ENCODE measurements at regions of chr13 and their contacts with region 1.

Region 1: DNA sequence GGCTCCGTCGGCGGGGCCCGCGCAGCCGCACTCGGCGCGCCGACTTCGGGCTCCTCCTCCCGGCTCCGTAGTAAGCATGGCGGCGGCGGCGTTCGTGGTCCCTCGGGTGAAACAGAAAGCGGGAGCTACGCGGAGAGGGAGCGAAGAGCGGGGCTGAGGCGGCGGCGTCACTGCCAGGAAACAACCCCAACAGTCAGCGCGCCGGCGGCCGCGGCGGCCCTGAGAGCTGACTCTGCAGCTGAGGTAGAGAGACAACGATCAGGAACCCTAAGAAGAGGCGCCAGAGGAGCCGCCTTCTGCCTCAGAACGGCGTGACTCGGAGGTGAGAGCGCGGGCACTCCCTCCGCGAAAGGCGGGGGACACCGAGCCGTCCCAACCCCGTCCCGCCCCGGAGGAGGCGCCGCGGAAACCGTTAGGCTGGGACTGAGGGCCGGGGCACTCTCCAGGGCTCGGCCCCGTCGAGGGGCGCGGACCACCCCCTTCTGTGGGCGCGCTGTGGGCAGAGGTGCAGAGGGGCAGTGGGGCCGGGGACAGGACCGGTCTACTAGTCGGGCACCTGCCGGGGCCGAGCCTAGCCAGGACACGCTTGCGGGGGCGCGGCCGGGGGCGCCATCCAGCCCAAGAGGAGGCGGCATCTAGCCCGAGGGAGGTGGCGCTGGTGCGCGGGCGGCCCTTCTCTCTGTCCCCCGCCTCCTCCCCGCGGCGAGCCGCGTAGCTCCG is at the start of gene FNDC3A:
- DNase-seq: peak; percentile 89
- H3K4me3 Mint-ChIP-seq: peak within 1 kb of the TSS; percentile 96
- H3K27ac Mint-ChIP-seq: peak within 1 kb of the TSS; percentile 98
- H3K4me1 Mint-ChIP-seq: peaks cover 31% of the 10 kb centered on the region
- H3K27me3 Mint-ChIP-seq: peaks cover 4% of the 10 kb centered on the region
- total RNA-seq, gene FNDC3A: 17.1 to 18.3 TPM

Region 2: DNA sequence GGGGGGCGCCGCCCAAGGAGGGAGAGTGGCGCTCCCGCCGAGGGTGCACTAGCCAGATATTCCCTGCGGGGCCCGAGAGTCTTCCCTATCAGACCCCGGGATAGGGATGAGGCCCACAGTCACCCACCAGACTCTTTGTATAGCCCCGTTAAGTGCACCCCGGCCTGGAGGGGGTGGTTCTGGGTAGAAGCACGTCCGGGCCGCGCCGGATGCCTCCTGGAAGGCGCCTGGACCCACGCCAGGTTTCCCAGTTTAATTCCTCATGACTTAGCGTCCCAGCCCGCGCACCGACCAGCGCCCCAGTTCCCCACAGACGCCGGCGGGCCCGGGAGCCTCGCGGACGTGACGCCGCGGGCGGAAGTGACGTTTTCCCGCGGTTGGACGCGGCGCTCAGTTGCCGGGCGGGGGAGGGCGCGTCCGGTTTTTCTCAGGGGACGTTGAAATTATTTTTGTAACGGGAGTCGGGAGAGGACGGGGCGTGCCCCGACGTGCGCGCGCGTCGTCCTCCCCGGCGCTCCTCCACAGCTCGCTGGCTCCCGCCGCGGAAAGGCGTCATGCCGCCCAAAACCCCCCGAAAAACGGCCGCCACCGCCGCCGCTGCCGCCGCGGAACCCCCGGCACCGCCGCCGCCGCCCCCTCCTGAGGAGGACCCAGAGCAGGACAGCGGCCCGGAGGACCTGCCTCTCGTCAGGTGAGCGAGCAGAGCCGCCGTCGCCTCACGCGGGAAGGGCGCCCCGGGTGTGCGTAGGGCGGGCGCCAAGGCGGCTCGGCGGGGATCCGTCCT is 672.5 kb before region 1 on chr13 and contains the start of gene RB1:
- CTCF ChIA-PET with region 1: no interaction called
- intact Hi-C with region 1: loop called (anchors 5 kb)
- DNase-seq: peak; percentile 92
- H3K4me3 Mint-ChIP-seq: peak within 1 kb of the TSS; percentile 87
- H3K27ac Mint-ChIP-seq: peak within 1 kb of the TSS; percentile 97
- H3K4me1 Mint-ChIP-seq: peaks cover 23% of the 10 kb centered on the region
- H3K27me3 Mint-ChIP-seq: no peaks in the 10 kb centered on the region
- total RNA-seq, gene RB1: 25.1 to 25.6 TPM

Region 3: DNA sequence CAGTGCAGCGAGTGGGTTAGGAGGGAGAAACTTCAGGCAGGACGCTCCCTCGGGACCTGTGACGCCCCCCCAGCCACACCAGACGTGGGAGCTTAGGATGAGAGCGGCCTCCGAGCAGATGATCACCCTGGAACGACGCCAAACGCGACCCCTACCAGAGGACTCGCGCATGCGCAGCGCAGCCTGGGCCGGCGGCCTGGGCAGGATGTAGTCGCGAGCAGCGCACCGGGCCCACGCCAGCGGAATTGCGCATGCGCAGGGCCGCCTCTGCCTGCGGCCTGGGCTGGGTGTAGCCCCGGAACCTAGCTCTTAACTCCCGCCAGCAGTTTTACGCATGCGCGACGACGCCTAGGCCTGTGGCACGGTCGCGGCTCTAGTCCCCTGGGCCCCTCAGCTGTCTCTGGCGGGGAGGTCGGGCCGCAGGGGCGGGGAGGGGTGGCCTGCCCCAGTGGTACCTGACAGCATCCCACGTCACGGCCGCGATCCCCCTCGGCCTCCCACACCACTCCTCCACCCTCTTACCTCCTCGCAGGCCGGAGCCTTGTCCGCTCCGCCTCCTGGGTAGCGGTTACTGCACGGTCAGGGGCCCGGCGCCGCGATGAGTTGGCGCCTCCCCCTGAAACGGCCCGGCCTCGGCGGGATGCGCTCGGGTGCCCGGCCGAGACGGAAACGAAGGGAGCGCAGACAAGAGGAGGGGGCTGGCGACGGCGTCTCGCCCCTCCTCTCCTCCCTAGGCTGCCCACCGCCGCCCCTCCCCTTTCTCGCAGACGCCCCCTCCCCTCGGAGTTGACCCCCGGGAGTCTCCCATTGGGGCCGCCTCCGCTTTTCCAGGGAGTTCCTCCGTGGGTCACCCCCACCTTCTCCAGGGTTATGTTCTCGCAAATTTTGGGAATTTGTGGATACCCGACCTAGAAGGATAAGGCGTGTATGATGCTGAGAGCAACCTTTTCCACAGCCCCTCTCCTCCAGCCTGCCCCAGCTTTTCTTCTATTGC is 443.2 kb before region 1 on chr13 and contains the start of gene RCBTB2:
- CTCF ChIA-PET with region 1: no interaction called
- intact Hi-C with region 1: loop called (anchors 1 kb)
- DNase-seq: peak; percentile 98
- H3K4me3 Mint-ChIP-seq: peak within 1 kb of the TSS; percentile 93
- H3K27ac Mint-ChIP-seq: peak within 1 kb of the TSS; percentile 97
- H3K4me1 Mint-ChIP-seq: peaks cover 17% of the 10 kb centered on the region
- H3K27me3 Mint-ChIP-seq: no peaks in the 10 kb centered on the region
- total RNA-seq, gene RCBTB2: 1.2 to 1.4 TPM

Region 4: DNA sequence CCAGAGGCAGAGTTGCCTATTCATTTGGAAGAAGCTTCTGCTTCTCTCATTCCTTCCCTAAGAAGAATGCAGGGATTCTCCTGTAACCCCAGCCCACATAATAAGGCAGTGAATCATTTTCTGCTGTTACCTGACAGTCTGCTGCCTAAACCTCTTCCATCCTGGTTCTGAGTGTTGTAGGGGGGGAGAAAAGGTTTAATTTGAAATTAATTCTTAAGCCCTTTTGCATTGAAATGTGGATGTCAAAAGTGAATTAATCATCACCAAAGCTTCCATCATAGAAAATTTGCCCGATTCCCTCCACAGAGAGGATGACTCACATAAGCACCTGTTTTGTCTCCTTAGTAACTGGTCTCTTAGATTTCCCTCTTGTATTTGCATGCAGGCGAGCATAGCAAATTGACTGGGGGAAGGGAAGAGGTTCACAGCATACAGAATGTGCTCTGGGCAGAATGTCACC is 147.0 kb before region 1 on chr13:
- CTCF ChIA-PET with region 1: no interaction called
- intact Hi-C with region 1: loop called (anchors 1 kb)
- DNase-seq: peak; percentile 45
- H3K4me3 Mint-ChIP-seq: no peak overlapping the region
- H3K27ac Mint-ChIP-seq: no peak overlapping the region
- H3K4me1 Mint-ChIP-seq: peaks cover 48% of the 10 kb centered on the region
- H3K27me3 Mint-ChIP-seq: no peaks in the 10 kb centered on the region

Region 5: DNA sequence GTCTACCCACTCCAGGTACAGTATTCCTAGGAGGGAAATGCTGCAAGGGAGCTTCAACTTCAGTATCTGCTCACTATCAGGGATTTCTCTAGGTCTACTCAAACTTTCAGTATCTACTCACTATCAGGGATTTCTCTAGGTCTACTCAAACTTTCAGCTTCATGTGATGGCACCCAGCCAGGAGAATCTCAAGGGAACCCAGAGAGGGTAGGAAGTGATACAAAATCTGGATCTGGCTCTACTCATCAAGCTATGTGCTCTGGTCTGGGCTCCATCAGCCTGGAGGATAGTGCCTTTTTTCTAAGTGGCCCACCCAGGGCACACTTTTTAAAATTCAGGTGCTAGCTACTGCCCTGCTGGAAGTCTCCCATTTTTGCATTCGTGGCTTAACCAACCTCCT is 52.6 kb before region 1 on chr13:
- CTCF ChIA-PET with region 1: no interaction called
- intact Hi-C with region 1: no loop called
- DNase-seq: no peak
- H3K4me3 Mint-ChIP-seq: no peak overlapping the region
- H3K27ac Mint-ChIP-seq: no peak overlapping the region
- H3K4me1 Mint-ChIP-seq: no peaks in the 10 kb centered on the region
- H3K27me3 Mint-ChIP-seq: no peaks in the 10 kb centered on the region

Region 6: GRCh38 chr13:48994706-48995105 is 18.7 kb after region 1 on chr13:
- CTCF ChIA-PET with region 1: no interaction called
- intact Hi-C with region 1: loop called (anchors 2 kb)
- DNase-seq: no peak
- H3K4me3 Mint-ChIP-seq: no peak overlapping the region
- H3K27ac Mint-ChIP-seq: no peak overlapping the region
- H3K4me1 Mint-ChIP-seq: peaks cover 30% of the 10 kb centered on the region
- H3K27me3 Mint-ChIP-seq: no peaks in the 10 kb centered on the region

Region 7: GRCh38 chr13:49495783-49496762 is 520.1 kb after region 1 on chr13 and contains the start of gene PHF11:
- CTCF ChIA-PET with region 1: no interaction called
- intact Hi-C with region 1: loop called (anchors 1 kb)
- DNase-seq: peak; percentile 95
- H3K4me3 Mint-ChIP-seq: peak within 1 kb of the TSS; percentile 91
- H3K27ac Mint-ChIP-seq: peak within 1 kb of the TSS; percentile 96
- H3K4me1 Mint-ChIP-seq: peaks cover 49% of the 10 kb centered on the region
- H3K27me3 Mint-ChIP-seq: no peaks in the 10 kb centered on the region
- total RNA-seq, gene PHF11: 91.4 to 96.9 TPM